ENCODE measurements at regions of chr1 and their contacts with region 1.

Region 1: DNA sequence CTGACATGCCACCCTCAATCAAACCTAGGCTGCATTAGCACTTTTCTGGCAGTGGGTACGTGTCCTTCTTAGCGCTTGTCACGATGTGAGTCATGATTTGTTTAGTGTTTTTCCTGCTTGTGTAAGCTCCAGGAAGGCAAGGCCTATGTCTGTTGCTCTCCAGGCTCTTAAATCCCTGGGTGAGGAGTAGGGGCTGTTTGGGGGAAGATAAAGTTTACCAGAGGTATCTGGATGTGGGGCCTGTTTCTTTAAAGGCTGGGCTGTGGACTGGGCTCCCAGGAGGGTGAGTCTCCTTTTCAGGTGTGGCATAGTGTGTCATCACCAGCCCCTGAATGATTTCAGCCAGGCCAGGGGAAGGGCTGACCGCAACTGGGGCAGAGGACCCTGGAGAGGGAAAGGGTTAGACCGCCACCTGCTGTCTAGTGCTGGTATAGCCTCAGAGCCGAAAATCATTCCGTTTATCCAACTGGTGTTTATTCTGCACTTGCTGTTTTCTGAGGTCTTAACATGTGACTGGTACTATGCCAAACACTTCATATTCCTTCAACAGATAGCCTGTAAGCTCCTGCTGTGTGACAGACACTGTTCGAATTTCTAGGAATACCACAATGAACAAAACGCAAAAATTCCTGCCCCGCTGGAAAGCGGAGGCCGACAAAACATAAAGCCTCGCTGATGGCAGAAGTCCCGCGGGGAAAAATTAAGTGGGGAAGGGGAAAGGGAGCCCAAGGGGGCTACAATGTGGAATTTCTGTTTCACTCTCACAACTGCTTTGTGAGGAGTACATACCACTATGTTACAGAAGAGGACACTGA is 9.7 kb downstream of the SERINC2 start:
- DNase-seq: peak; percentile 57 to 68
- ATAC-seq: peak; percentile 53 to 83 (median 80)
- H3K4me3 ChIP-seq: no peak overlapping the region
- H3K27ac ChIP-seq: no peak overlapping the region
- H3K4me1 ChIP-seq: peaks cover 0 to 3% (median 0%) of the 10 kb centered on the region in 9 donors
- H3K27me3 ChIP-seq: peaks cover 0 to 23% (median 13%) of the 10 kb centered on the region in 7 donors
- CTCF ChIP-seq: peak; percentile 85 to 96 (median 93)

Region 2: GRCh38 chr1:31182352-31182751 is 240.4 kb before region 1 on chr1:
- intact Hi-C with region 1: loop called (anchors 1 to 5 kb)
- DNase-seq: peak; percentile 78 to 83
- ATAC-seq: peak; percentile 84 to 94 (median 92)
- H3K4me3 ChIP-seq: peak overlapping the region in 9 of 10 donors; percentile 15 to 40 (median 36)
- H3K27ac ChIP-seq: no peak overlapping the region
- H3K4me1 ChIP-seq: peaks cover 5 to 16% (median 13%) of the 10 kb centered on the region in 9 donors
- H3K27me3 ChIP-seq: peaks cover 0 to 41% (median 38%) of the 10 kb centered on the region in 7 donors
- CTCF ChIP-seq: peak in 4 of 9 donors; percentile 23 to 43 (median 41)

Region 3: GRCh38 chr1:31189696-31190674 is 232.7 kb before region 1 on chr1:
- intact Hi-C with region 1: loop called in 4 of 10 experiments (anchors 2 to 5 kb)
- DNase-seq: no peak
- ATAC-seq: no peak
- H3K4me3 ChIP-seq: no peak overlapping the region
- H3K27ac ChIP-seq: no peak overlapping the region
- H3K4me1 ChIP-seq: no peaks in the 10 kb centered on the region
- H3K27me3 ChIP-seq: peaks cover 0 to 18% (median 8%) of the 10 kb centered on the region in 7 donors
- CTCF ChIP-seq: no peak

Region 4: DNA sequence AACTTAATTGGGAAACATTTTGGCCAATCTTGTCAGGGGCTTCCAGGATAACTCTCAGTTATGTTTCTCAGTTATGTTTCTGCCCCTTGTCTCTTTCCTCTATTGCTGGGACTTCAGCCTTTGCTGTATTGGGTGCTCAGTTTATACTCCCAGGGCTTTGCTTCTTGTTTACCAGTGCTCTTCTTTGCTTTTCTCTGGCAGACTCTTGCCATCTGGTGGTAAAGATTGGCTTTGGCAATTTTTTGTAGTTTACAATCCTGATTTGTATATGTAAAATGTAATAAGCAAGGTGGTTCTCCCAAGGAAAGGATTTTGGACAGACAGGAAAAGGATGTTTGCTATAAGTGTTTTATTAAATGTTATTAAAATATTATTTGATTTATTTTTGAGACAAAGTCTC is 87.7 kb before region 1 on chr1:
- intact Hi-C with region 1: loop called in 1 of 10 experiments (anchors 10 kb)
- DNase-seq: no peak
- ATAC-seq: no peak
- H3K4me3 ChIP-seq: no peak overlapping the region
- H3K27ac ChIP-seq: no peak overlapping the region
- H3K4me1 ChIP-seq: no peaks in the 10 kb centered on the region
- H3K27me3 ChIP-seq: no peaks in the 10 kb centered on the region
- CTCF ChIP-seq: peak in 8 of 9 donors; percentile 14 to 61 (median 48)

Region 5: DNA sequence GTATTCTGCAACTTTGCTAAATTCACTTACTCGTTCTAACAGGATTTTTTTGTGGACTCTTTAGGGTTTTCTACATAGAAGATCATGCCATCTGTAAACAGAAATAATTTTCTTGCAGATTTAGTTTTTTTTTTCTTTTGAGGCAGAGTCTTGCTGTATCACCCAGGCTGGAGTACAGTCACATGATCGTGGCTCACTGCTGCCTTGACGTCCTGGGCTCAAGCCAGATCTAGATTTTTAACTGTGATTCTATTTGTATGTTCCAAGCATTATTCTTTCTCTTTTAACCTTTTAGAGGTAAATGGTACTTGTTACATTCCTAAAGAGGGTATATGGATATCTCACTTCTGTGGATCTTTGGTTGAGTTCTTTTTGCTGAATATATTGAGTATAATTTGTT is 68.4 kb before region 1 on chr1:
- intact Hi-C with region 1: loop called in 1 of 10 experiments (anchors 10 kb)
- DNase-seq: no peak
- ATAC-seq: no peak
- H3K4me3 ChIP-seq: no peak overlapping the region
- H3K27ac ChIP-seq: no peak overlapping the region
- H3K4me1 ChIP-seq: no peaks in the 10 kb centered on the region
- H3K27me3 ChIP-seq: no peaks in the 10 kb centered on the region
- CTCF ChIP-seq: no peak

Region 6: GRCh38 chr1:31394628-31395193 is 28.0 kb before region 1 on chr1:
- intact Hi-C with region 1: loop called in 4 of 10 experiments (anchors 1 to 2 kb)
- DNase-seq: peak; percentile 81 to 82
- ATAC-seq: peak; percentile 89 to 97 (median 94)
- H3K4me3 ChIP-seq: peak overlapping the region in 9 of 10 donors; percentile 8 to 53 (median 44)
- H3K27ac ChIP-seq: peak overlapping the region in 5 of 10 donors; percentile 42 to 55 (median 44)
- H3K4me1 ChIP-seq: peaks cover 0 to 22% (median 4%) of the 10 kb centered on the region in 9 donors
- H3K27me3 ChIP-seq: peaks cover 0 to 4% (median 0%) of the 10 kb centered on the region in 7 donors
- CTCF ChIP-seq: peak; percentile 74 to 96 (median 91)